H1 (cell line): ENCODE measurements at regions of chr9 and their contacts with region 1.

Region 1: DNA sequence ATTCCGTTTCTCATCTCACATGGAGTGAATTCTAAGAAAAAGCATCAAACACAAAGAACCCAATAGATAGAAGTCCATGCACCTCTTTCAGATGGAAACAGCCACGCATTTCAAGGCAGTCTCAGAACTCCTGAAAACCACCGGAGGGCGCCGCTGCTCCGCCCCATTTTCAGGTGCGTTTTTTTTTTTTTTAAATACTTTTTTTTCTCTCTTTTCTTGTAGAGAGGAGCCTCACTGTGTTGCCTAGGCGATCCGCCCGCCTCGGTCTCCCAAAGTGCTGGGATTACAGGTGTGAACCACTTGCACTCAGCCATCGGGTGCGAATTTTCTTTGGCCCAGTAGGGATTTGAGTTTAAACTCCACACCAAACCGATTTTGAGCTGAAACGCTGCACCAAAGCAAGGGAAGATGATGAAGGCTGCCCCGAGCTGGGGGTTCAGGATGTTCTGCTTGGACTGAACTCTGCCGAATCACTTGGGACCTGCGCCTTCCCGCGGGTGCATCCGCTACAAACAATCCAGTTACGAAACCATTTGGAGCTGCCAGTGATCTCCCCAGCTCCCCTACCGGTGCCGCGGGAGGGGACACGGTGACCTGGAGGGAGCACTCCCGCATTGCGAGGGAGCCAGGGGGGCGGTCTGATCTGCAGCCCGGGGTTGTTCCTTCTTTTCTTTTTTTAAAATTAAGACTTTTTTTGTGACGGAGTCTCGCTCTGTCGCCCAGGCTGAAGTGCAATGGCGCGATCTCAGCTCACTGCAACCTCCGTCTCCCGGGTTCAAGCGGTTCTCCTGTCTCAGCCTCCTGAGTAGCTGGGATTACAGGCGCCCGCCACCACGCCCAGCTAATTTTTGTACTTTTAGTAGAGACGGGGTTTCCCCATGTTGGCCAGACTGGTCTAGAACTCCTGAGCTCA is 1.4 kb downstream of the PTGR1 start:
- DNase-seq: peak; percentile 63 to 77
- H3K4me3 ChIP-seq: peak overlapping the region; percentile 42 to 99 (median 80)
- H3K27ac ChIP-seq: no peak overlapping the region
- H3K4me1 ChIP-seq: no peaks in the 10 kb centered on the region
- H3K27me3 ChIP-seq: peaks cover 0 to 7% (median 5%) of the 10 kb centered on the region in 4 experiments; a peak in 2 of 7 replicates
- CTCF ChIP-seq: peak; percentile 60 to 69 (median 64)
- EP300 ChIP-seq: no peak
- POLR2A ChIP-seq: no peak
- RAD21 ChIP-seq: peak; percentile 82 to 84

Region 2: GRCh38 chr9:111613441-111614039 is 15.5 kb after region 1 on chr9:
- CTCF ChIA-PET with region 1: interaction called, 42 read pairs
- POLR2A ChIA-PET with region 1: interaction called, 3 read pairs
- DNase-seq: no peak
- H3K4me3 ChIP-seq: no peak overlapping the region
- H3K27ac ChIP-seq: no peak overlapping the region
- H3K4me1 ChIP-seq: no peaks in the 10 kb centered on the region
- H3K27me3 ChIP-seq: no peaks in the 10 kb centered on the region; a peak in 1 of 7 replicates
- CTCF ChIP-seq: no peak
- EP300 ChIP-seq: no peak
- POLR2A ChIP-seq: no peak
- RAD21 ChIP-seq: no peak

Region 3: DNA sequence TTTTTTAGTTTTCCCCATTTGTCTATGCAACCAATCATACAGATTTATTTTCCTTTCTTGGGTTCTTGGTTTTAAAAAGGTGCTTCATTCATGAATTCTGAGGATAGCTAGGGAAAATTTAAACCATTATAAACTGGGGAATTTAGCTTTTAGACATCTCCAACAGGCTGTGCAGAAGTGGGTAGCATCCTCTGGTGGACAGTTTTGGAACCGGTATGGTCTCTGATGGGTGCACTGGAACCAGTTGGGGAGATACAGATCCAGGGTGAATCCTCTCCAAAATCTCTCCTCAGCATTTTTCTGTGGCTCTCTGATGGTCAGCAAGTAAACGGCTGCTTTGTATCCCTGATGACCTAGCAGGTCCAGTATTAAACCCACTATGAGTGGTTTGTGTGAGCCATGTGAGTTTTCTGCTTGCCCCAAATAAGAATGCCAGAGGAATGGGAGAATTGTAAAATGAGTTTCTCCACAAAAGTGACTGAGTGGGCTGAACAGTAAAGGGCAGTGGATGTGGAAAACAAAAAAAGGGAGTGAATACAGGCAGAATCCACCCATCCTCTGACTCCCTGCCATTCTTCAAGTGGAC is 23.9 kb after region 1 on chr9:
- CTCF ChIA-PET with region 1: interaction called, 42 read pairs
- POLR2A ChIA-PET with region 1: interaction called, 8 read pairs
- DNase-seq: no peak
- H3K4me3 ChIP-seq: no peak overlapping the region
- H3K27ac ChIP-seq: no peak overlapping the region
- H3K4me1 ChIP-seq: no peaks in the 10 kb centered on the region
- H3K27me3 ChIP-seq: peaks cover 0 to 1% (median 0%) of the 10 kb centered on the region in 4 experiments; a peak in 1 of 7 replicates
- CTCF ChIP-seq: peak; percentile 64 to 79 (median 70)
- EP300 ChIP-seq: no peak
- POLR2A ChIP-seq: no peak
- RAD21 ChIP-seq: peak; percentile 71 to 77

Region 4: GRCh38 chr9:111631071-111631971 is 33.2 kb after region 1 on chr9 and contains the start of gene DNAJC25:
- CTCF ChIA-PET with region 1: interaction called, 9 read pairs
- POLR2A ChIA-PET with region 1: interaction called, 27 read pairs
- DNase-seq: peak; percentile 96 to 99
- H3K4me3 ChIP-seq: peak within 1 kb of the TSS; percentile 81 to 92 (median 90)
- H3K27ac ChIP-seq: peak within 1 kb of the TSS; percentile 49; the same call in 1 of the 2 replicates
- H3K4me1 ChIP-seq: peaks cover 0 to 3% (median 0%) of the 10 kb centered on the region in 4 experiments; a peak in 3 of 7 replicates
- H3K27me3 ChIP-seq: no peaks in the 10 kb centered on the region
- CTCF ChIP-seq: 0 out of 4 replicates have a peak, but pooled peaks of 1 of the 3 experiments have one; percentile 1
- EP300 ChIP-seq: no peak
- POLR2A ChIP-seq: peak; percentile 100
- RAD21 ChIP-seq: no peak
- total RNA-seq, gene DNAJC25: 6.2 and 6.6 TPM in 2 replicates